Activated CD4-positive, alpha-beta memory T cell treated with anti-CD3 and anti-CD28 coated beads for 36 hours (primary cell): ENCODE measurements at regions of chr4 and their contacts with region 1.

Region 1: GRCh38 chr4:121192480-121192879 is 28.4 kb upstream of the TNIP3 start:
- DNase-seq: peak; percentile 33
- H3K4me3 Mint-ChIP-seq: no peak overlapping the region
- H3K27ac Mint-ChIP-seq: peak overlapping the region; percentile 11
- H3K4me1 Mint-ChIP-seq: peaks cover 63% of the 10 kb centered on the region
- H3K27me3 Mint-ChIP-seq: no peaks in the 10 kb centered on the region

Region 2: DNA sequence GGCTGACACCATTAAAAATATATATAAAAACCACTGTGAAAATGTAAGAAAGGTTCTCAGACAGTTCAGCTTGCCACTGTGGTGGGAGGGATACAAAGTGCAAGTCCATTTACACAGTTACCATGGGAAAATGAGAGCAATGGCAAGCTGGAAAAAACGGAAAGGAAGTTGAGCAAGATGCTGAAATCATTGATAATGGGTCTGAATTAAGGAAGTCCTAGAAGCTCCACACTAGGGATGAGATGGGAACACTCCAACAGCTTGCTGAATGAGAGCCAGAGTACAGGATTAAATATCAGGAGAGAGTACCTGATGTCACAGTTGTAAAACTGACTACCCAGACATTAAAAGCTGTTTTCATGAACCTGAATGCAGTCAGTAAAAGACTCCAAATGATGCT is 488.6 kb before region 1 on chr4:
- CTCF ChIA-PET with region 1: no interaction called
- POLR2A ChIA-PET with region 1: no interaction called
- intact Hi-C with region 1: no loop called
- DNase-seq: no peak
- H3K4me3 Mint-ChIP-seq: no peak overlapping the region
- H3K27ac Mint-ChIP-seq: no peak overlapping the region
- H3K4me1 Mint-ChIP-seq: no peaks in the 10 kb centered on the region
- H3K27me3 Mint-ChIP-seq: peaks cover 9% of the 10 kb centered on the region

Region 3: DNA sequence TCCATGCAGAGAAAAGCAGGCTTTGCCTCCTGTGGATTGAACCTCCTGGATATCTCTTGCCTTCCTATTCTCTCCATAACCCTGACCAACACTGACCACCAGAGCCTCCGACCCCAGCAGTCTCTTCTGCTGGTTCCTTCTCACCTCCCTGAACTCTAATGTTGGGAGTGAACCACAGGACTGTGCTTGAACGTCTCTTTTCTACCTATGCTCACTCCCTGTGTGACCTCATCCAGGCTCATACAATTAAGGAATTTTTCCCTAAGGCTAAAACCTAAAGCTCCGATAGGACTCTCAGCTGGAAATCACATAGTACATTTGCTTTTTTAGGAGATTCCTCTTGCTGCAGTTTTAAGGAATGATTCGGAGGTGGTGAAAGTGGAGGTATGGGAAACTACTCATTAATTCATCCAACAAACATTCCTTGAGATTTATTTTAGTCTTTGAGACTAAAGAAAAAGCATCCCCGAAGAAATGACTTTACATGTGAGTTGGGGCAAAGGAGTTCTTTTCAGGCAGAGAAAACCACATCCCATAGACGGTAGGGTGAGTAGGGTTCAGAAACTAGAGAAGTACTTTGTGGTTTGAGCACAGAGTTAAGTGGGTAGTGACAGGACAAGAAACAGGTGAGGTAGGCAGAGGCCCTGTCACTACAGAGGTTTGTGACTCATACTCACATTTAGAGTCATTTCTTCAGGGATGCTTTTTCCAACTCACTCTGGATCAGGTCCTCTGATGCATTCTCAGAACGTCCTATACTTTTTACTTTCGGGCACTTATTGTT is 151.0 kb before region 1 on chr4:
- CTCF ChIA-PET with region 1: no interaction called
- POLR2A ChIA-PET with region 1: no interaction called
- intact Hi-C with region 1: loop called (anchors 5 kb)
- DNase-seq: peak; percentile 38
- H3K4me3 Mint-ChIP-seq: no peak overlapping the region
- H3K27ac Mint-ChIP-seq: no peak overlapping the region
- H3K4me1 Mint-ChIP-seq: peaks cover 13% of the 10 kb centered on the region
- H3K27me3 Mint-ChIP-seq: peaks cover 19% of the 10 kb centered on the region

Region 4: GRCh38 chr4:121100093-121100775 is 92.2 kb before region 1 on chr4:
- CTCF ChIA-PET with region 1: no interaction called
- POLR2A ChIA-PET with region 1: no interaction called
- intact Hi-C with region 1: no loop called
- DNase-seq: no peak
- H3K4me3 Mint-ChIP-seq: no peak overlapping the region
- H3K27ac Mint-ChIP-seq: no peak overlapping the region
- H3K4me1 Mint-ChIP-seq: no peaks in the 10 kb centered on the region
- H3K27me3 Mint-ChIP-seq: no peaks in the 10 kb centered on the region

Region 5: GRCh38 chr4:121212806-121213205 is 20.3 kb after region 1 on chr4:
- CTCF ChIA-PET with region 1: interaction called, 27 read pairs
- POLR2A ChIA-PET with region 1: no interaction called
- intact Hi-C with region 1: no loop called
- DNase-seq: no peak
- H3K4me3 Mint-ChIP-seq: no peak overlapping the region
- H3K27ac Mint-ChIP-seq: no peak overlapping the region
- H3K4me1 Mint-ChIP-seq: peaks cover 16% of the 10 kb centered on the region
- H3K27me3 Mint-ChIP-seq: no peaks in the 10 kb centered on the region

Region 6: GRCh38 chr4:121243485-121243884 is 51.0 kb after region 1 on chr4:
- CTCF ChIA-PET with region 1: interaction called, 126 read pairs
- POLR2A ChIA-PET with region 1: no interaction called
- intact Hi-C with region 1: no loop called
- DNase-seq: peak; percentile 49
- H3K4me3 Mint-ChIP-seq: peak overlapping the region; percentile 46
- H3K27ac Mint-ChIP-seq: peak overlapping the region; percentile 76
- H3K4me1 Mint-ChIP-seq: peaks cover 40% of the 10 kb centered on the region
- H3K27me3 Mint-ChIP-seq: peaks cover 3% of the 10 kb centered on the region

Region 7: DNA sequence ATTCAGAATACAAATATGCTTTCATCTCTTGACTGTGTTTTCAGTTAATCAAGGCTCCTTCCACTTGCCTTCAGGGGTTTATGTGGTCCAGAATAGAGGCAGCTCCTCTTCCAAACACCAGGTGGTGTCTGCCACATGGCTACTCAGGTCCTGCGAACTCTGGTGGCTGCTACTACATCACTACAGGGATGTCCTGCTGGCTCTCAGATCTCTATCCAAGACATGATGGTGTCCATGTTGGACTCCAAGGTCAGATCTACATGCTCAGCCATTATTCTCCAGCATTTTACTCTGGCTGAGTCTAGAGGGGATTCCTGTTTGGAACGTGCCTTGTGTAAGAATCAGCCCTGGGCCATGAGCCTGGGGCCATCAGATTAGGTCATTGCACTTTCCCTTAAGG is 85.1 kb after region 1 on chr4:
- CTCF ChIA-PET with region 1: interaction called, 33 read pairs
- POLR2A ChIA-PET with region 1: interaction called, 6 read pairs
- intact Hi-C with region 1: loop called (anchors 1 kb)
- DNase-seq: no peak
- H3K4me3 Mint-ChIP-seq: no peak overlapping the region
- H3K27ac Mint-ChIP-seq: no peak overlapping the region
- H3K4me1 Mint-ChIP-seq: peaks cover 28% of the 10 kb centered on the region
- H3K27me3 Mint-ChIP-seq: peaks cover 10% of the 10 kb centered on the region

Region 8: DNA sequence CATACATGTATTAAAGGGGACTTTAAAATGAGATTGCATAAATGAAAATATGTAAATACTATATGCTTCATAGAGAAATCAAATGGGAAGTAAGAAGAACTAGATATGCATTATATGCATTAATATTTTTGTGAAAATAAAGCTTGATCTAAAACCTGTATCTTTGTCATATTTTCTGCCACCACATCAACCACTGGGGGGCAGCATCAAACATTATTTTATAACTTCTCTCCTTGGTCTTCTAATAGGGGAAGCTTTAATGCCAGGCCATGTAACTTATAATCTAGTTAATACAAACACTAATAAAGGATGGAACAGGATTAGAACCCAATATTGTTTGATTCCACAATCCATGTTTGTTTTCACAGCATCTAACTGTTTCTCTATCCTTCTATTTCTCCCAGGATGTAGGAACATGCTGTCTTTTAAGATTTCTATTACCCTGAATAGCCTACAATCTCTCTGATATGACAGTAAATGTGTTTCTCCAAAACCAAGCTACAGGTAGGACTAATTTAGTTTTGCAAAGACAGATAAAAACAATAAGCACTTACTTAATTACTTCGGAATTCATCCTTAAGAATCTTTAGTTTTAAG is 178.3 kb after region 1 on chr4:
- CTCF ChIA-PET with region 1: interaction called, 4 read pairs
- POLR2A ChIA-PET with region 1: no interaction called
- intact Hi-C with region 1: loop called (anchors 2 kb)
- DNase-seq: peak; percentile 43
- H3K4me3 Mint-ChIP-seq: no peak overlapping the region
- H3K27ac Mint-ChIP-seq: no peak overlapping the region
- H3K4me1 Mint-ChIP-seq: peaks cover 4% of the 10 kb centered on the region
- H3K27me3 Mint-ChIP-seq: peaks cover 11% of the 10 kb centered on the region

Region 9: GRCh38 chr4:121726642-121727268 is 534.3 kb after region 1 on chr4:
- CTCF ChIA-PET with region 1: no interaction called
- POLR2A ChIA-PET with region 1: no interaction called
- intact Hi-C with region 1: loop called (anchors 5 kb)
- DNase-seq: peak; percentile 42
- H3K4me3 Mint-ChIP-seq: no peak overlapping the region
- H3K27ac Mint-ChIP-seq: no peak overlapping the region
- H3K4me1 Mint-ChIP-seq: peaks cover 8% of the 10 kb centered on the region
- H3K27me3 Mint-ChIP-seq: peaks cover 2% of the 10 kb centered on the region